MCF 10A (cell line): ENCODE measurements at regions of chr3 and their contacts with region 1.

Region 1: GRCh38 chr3:149473357-149474249 is 894 bp upstream of the TM4SF4 start:
- DNase-seq: peak; percentile 97
- H3K4me3 Mint-ChIP-seq: no peak overlapping the region
- H3K27ac Mint-ChIP-seq: peak overlapping the region; percentile 33
- H3K4me1 Mint-ChIP-seq: peaks cover 20% of the 10 kb centered on the region
- H3K27me3 Mint-ChIP-seq: no peaks in the 10 kb centered on the region
- CTCF ChIP-seq: no peak

Region 2: GRCh38 chr3:149058602-149059001 is 415.0 kb before region 1 on chr3:
- CTCF ChIA-PET with region 1: no interaction called
- POLR2A ChIA-PET with region 1: no interaction called
- intact Hi-C with region 1: no loop called
- DNase-seq: no peak
- H3K4me3 Mint-ChIP-seq: no peak overlapping the region
- H3K27ac Mint-ChIP-seq: peak overlapping the region; percentile 36
- H3K4me1 Mint-ChIP-seq: no peaks in the 10 kb centered on the region
- H3K27me3 Mint-ChIP-seq: no peaks in the 10 kb centered on the region
- CTCF ChIP-seq: no peak

Region 3: DNA sequence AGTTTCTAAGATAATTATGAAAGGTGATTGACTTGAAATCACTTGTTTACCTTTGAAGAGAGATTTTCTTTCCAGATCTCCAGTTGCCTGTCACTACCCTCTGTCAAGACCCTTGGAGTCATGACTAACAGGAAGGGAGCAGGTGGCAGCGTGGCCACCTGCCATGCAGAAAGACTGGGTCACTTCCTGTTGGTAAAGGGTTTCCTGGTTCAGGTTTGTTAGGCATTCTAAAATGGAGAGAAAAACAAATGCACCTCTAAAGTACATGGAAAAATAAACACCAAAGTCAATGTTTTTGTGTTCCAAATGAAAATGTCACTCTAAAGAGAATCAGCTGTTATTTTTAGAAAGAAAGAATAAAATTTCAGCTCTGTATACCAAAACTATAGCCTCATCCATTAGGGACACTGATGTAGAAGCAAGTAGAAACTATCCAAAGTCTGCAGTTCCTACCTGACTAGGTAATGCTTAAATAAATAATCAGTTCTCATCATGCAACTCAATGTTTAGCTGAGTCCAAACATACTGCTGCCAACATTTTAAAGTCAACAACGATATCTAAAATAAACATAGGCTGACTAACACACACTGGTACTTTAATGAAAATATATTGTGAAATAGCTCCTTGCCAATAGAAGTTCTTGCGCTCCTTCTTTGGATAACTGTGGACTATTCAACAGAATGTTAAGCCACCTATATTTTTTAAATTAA is 72.2 kb before region 1 on chr3:
- CTCF ChIA-PET with region 1: interaction called, 78 read pairs
- POLR2A ChIA-PET with region 1: interaction called, 31 read pairs
- intact Hi-C with region 1: no loop called
- DNase-seq: peak; percentile 80
- H3K4me3 Mint-ChIP-seq: no peak overlapping the region
- H3K27ac Mint-ChIP-seq: peak overlapping the region; percentile 67
- H3K4me1 Mint-ChIP-seq: peaks cover 8% of the 10 kb centered on the region
- H3K27me3 Mint-ChIP-seq: no peaks in the 10 kb centered on the region
- CTCF ChIP-seq: no peak

Region 4: DNA sequence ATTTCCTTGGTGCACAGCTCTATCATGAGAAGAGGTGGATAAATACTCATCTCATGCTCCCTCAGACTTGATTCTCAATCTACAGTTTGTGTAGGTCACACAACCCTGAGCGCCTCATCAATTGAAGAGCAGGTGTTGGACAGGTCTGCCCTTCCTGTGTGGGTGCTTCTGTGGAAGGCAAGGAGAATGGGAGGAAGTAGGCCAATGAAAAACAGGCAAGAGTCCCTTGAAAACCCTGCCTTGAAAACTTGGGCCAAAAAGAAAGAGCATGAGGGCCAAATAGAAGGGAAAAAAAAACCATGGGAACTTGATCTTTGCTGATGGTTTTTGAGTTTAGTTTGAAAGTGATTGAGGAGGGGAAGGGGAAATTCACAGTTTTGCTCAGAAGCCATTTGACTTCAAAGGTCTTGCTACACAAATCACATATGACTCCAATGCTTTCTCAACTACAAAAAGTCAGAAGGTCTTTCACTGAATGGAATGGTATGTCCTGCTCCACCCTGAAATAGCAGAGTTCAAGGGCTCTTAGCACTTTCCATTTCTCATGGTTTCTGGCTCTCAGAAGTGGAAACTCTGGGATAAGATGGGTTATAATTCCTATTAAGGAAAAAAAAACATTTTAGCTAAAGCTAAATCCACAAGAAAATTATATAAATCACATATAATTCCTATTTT is 58.9 kb before region 1 on chr3:
- CTCF ChIA-PET with region 1: no interaction called
- POLR2A ChIA-PET with region 1: interaction called, 10 read pairs
- intact Hi-C with region 1: no loop called
- DNase-seq: no peak
- H3K4me3 Mint-ChIP-seq: no peak overlapping the region
- H3K27ac Mint-ChIP-seq: peak overlapping the region; percentile 63
- H3K4me1 Mint-ChIP-seq: peaks cover 12% of the 10 kb centered on the region
- H3K27me3 Mint-ChIP-seq: no peaks in the 10 kb centered on the region
- CTCF ChIP-seq: no peak

Region 5: GRCh38 chr3:149454746-149455145 is 18.9 kb before region 1 on chr3:
- CTCF ChIA-PET with region 1: interaction called, 7 read pairs
- POLR2A ChIA-PET with region 1: interaction called, 14 read pairs
- intact Hi-C with region 1: no loop called
- DNase-seq: peak; percentile 46
- H3K4me3 Mint-ChIP-seq: no peak overlapping the region
- H3K27ac Mint-ChIP-seq: no peak overlapping the region
- H3K4me1 Mint-ChIP-seq: peaks cover 15% of the 10 kb centered on the region
- H3K27me3 Mint-ChIP-seq: no peaks in the 10 kb centered on the region
- CTCF ChIP-seq: no peak

Region 6: DNA sequence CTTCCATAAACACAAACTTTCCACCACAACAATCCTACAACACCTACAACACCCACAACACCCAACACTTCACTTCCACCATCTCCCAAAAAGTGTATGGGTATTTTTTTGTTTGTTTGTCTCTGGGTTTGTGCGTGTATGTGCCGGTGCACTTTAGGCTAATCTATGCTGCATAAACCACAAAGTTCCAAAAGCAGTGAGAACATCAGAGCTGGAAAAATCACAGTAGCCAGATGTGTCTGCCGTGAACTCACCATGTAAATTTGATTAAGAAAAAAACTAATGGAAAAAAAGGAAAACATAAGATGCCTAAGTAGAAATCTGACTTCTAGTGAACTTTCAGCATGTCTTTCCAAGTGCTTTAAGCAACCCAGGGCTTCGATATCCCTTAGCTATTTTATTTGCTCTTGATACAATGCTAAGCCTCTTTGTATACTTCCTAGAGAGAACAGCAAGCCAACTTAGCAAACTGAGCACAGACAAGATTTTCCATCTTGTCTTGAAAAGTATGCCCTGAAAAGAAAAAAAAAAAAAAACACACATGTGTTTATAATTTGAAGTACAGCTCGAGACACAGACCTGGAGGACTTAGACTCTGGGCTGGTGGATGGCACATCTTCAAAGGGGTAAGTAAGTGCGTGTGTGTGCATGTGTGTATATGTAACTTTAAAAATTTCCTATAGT is 92.8 kb after region 1 on chr3:
- CTCF ChIA-PET with region 1: no interaction called
- POLR2A ChIA-PET with region 1: no interaction called
- intact Hi-C with region 1: no loop called
- DNase-seq: no peak
- H3K4me3 Mint-ChIP-seq: no peak overlapping the region
- H3K27ac Mint-ChIP-seq: no peak overlapping the region
- H3K4me1 Mint-ChIP-seq: peaks cover 10% of the 10 kb centered on the region
- H3K27me3 Mint-ChIP-seq: no peaks in the 10 kb centered on the region
- CTCF ChIP-seq: no peak

Region 7: DNA sequence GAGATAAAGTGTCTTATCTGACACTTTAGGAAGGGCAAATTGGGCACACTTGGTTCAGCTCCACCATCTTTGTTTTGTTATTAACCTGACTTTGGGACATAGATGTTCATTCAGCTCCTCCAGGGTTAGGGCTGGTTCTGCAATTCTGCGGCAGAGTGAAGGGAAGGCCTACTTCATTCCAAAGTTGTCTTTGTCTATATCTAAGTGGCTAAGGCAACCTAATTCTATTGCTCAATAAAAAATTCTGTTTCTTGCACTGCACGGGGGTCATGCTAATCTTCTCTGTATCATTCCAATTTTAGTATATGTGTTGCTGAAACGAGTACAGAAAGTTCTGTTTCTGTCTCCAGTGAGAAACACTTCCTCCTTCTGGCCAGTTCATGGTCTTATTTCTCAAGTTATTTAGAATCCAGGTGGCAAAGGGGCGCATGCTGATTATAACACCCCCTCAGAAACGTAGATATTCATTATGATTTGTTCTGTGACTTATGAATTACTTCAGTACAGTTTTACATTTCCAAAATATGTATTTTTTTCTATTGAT is 443.6 kb after region 1 on chr3:
- CTCF ChIA-PET with region 1: no interaction called
- POLR2A ChIA-PET with region 1: no interaction called
- intact Hi-C with region 1: no loop called
- DNase-seq: no peak
- H3K4me3 Mint-ChIP-seq: no peak overlapping the region
- H3K27ac Mint-ChIP-seq: no peak overlapping the region
- H3K4me1 Mint-ChIP-seq: no peaks in the 10 kb centered on the region
- H3K27me3 Mint-ChIP-seq: no peaks in the 10 kb centered on the region
- CTCF ChIP-seq: no peak